Activated CD8-positive, alpha-beta T cell treated with anti-CD3 and anti-CD28 coated beads for 36 hours (primary cell): ENCODE measurements at regions of chr1 and their contacts with region 1.

Region 1: DNA sequence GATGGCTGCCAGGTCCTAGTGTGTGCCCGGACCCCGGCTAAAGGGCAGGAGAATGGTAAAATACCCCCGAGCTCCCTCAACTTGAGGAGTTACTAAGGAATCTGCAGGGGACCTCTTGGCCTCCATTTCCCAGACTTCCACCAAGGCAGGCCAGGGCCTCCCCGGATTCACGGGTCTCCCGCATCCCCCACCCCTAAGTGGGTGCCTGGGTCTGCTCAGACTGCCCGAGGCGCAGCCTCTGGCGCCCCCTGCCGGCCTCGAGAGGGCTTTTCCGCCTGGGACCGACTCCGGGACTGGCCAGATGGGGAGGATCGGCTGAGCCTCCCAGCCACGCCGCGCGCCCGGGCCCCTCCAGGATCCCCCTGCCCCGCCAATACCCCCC is 1.7 kb downstream of the PLEKHG5 start:
- DNase-seq: peak; percentile 82
- ATAC-seq: peak; percentile 62
- H3K4me3 Mint-ChIP-seq: peak overlapping the region; percentile 77
- H3K27ac Mint-ChIP-seq: peak overlapping the region; percentile 57
- H3K4me1 Mint-ChIP-seq: peaks cover 25% of the 10 kb centered on the region
- H3K27me3 Mint-ChIP-seq: peaks cover 13% of the 10 kb centered on the region
- CTCF ChIP-seq: peak; percentile 100

Region 2: DNA sequence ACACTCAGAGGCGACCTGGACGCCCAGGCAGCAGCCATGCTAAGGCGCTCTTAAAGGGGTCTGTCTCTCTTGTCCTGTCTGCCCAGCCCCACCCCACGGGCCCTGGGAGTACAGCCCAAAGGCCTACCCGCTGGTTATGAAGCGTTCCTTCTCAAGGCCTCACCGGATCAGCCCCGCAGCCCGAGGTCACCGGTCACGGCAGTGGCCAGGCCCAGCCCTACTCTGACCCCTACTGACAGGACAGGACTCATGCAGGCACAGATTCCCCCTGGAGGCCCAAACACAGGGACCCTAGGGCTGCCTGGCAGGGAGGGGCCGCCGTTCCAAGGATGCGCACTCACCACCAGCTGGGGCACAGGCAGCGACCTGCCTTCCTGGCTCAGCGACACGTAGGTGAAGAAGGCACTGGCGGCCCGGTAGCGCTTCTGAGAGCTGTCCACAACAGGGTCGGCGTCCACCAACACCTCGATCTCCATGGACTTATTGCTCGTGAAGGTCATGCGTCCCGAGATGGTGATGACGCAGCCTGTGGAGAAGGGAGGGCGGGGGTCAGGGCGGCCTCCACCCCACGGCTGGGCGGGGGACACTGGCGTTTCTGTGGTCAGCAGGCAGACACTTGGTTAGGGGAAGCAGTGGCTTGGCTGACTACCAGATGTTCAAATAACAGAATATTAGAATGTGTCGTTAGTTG is 208.9 kb before region 1 on chr1:
- CTCF ChIA-PET with region 1: no interaction called
- POLR2A ChIA-PET with region 1: no interaction called
- intact Hi-C with region 1: no loop called
- DNase-seq: no peak
- ATAC-seq: no peak
- H3K4me3 Mint-ChIP-seq: no peak overlapping the region
- H3K27ac Mint-ChIP-seq: no peak overlapping the region
- H3K4me1 Mint-ChIP-seq: no peaks in the 10 kb centered on the region
- H3K27me3 Mint-ChIP-seq: no peaks in the 10 kb centered on the region
- CTCF ChIP-seq: no peak

Region 3: DNA sequence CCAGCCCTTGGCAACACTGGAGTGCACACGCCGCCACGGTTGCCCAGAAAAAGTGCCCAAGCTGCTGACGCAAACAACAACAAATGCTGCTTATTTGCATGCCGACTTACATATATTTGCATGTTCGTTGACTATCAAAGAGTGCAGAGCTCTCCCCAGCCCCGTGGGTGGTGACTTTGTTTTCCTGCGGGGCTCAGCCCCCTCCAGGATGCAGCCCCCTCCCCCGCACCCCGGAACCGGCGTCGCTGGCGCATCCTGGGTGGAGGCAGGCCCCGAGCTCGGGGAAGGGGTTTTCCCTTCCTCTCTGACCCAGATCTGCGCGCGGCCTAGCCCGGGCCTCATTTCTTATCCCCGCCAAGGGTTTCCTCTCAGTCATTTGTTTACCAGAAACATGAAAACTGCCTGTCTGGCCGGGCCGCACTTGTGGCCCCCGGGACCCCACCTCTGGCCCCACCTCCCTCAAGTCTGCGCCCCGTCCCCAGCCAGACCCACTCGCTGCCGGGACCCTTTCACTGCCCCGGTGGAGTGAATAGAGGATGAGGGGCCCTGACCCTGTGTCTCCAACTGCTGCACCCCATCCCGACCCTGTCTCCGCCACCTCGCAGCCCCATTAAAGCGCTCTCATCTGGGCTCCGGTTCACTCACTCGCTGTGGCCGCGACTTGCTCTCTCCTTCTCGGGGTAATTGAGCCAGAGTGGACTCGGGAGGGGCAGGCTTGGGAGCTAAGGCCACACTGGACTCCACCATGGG is 29.3 kb before region 1 on chr1:
- CTCF ChIA-PET with region 1: interaction called, 38 read pairs
- POLR2A ChIA-PET with region 1: interaction called, 12 read pairs
- intact Hi-C with region 1: no loop called
- DNase-seq: peak; percentile 91
- ATAC-seq: peak; percentile 87
- H3K4me3 Mint-ChIP-seq: peak overlapping the region; percentile 66
- H3K27ac Mint-ChIP-seq: peak overlapping the region; percentile 93
- H3K4me1 Mint-ChIP-seq: peaks cover 50% of the 10 kb centered on the region
- H3K27me3 Mint-ChIP-seq: peaks cover 16% of the 10 kb centered on the region
- CTCF ChIP-seq: no peak

Region 4: DNA sequence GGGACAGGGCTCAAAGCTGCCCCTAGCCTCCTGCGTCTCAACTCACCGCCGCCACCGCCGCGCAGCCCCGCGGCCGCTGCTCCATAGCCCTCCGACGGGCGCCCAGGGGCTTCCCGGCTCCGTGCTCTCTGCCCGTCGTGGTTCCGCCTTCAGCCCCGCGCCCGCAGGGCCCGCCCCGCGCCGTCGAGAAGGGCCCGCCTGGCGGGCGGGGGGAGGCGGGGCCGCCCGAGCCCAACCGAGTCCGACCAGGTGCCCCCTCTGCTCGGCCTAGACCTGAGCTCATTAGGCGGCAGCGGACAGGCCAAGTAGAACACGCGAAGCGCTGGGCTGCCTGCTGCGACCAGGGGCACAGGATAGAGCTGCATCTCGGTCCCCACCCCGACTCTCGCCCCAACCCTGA is 23.8 kb before region 1 on chr1 and contains the start of gene TNFRSF25:
- CTCF ChIA-PET with region 1: interaction called, 38 read pairs
- POLR2A ChIA-PET with region 1: interaction called, 12 read pairs
- intact Hi-C with region 1: no loop called
- DNase-seq: peak; percentile 57
- ATAC-seq: peak; percentile 65
- H3K4me3 Mint-ChIP-seq: peak within 1 kb of the TSS; percentile 92
- H3K27ac Mint-ChIP-seq: peak within 1 kb of the TSS; percentile 86
- H3K4me1 Mint-ChIP-seq: peaks cover 31% of the 10 kb centered on the region
- H3K27me3 Mint-ChIP-seq: no peaks in the 10 kb centered on the region
- CTCF ChIP-seq: no peak
- total RNA-seq, gene TNFRSF25: 55.8 to 57.8 TPM

Region 5: GRCh38 chr1:6475381-6476133 is 14.2 kb before region 1 on chr1:
- CTCF ChIA-PET with region 1: interaction called, 27 read pairs
- POLR2A ChIA-PET with region 1: interaction called, 3 read pairs
- intact Hi-C with region 1: no loop called
- DNase-seq: peak; percentile 80
- ATAC-seq: peak; percentile 95
- H3K4me3 Mint-ChIP-seq: no peak overlapping the region
- H3K27ac Mint-ChIP-seq: no peak overlapping the region
- H3K4me1 Mint-ChIP-seq: peaks cover 2% of the 10 kb centered on the region
- H3K27me3 Mint-ChIP-seq: no peaks in the 10 kb centered on the region
- CTCF ChIP-seq: peak; percentile 96

Region 6: GRCh38 chr1:6523566-6523965 is 33.8 kb after region 1 on chr1:
- CTCF ChIA-PET with region 1: interaction called, 20 read pairs
- POLR2A ChIA-PET with region 1: no interaction called
- intact Hi-C with region 1: no loop called
- DNase-seq: no peak
- ATAC-seq: no peak
- H3K4me3 Mint-ChIP-seq: no peak overlapping the region
- H3K27ac Mint-ChIP-seq: no peak overlapping the region
- H3K4me1 Mint-ChIP-seq: no peaks in the 10 kb centered on the region
- H3K27me3 Mint-ChIP-seq: no peaks in the 10 kb centered on the region
- CTCF ChIP-seq: peak; percentile 43